IMR-90 (cell line): ENCODE measurements at regions of chr3 and their contacts with region 1.

Region 1: GRCh38 chr3:186815435-186815834 is 9.2 kb upstream of the RFC4 start:
- DNase-seq: peak; percentile 68
- ATAC-seq: peak; percentile 90
- H3K4me3 ChIP-seq: no peak overlapping the region
- H3K27ac ChIP-seq: no peak overlapping the region
- H3K4me1 ChIP-seq: peaks cover 3% of the 10 kb centered on the region; the same call in 1 of the 2 replicates
- H3K27me3 ChIP-seq: no peaks in the 10 kb centered on the region
- CTCF ChIP-seq: no peak
- POLR2A ChIP-seq: no peak
- RAD21 ChIP-seq: no peak

Region 2: DNA sequence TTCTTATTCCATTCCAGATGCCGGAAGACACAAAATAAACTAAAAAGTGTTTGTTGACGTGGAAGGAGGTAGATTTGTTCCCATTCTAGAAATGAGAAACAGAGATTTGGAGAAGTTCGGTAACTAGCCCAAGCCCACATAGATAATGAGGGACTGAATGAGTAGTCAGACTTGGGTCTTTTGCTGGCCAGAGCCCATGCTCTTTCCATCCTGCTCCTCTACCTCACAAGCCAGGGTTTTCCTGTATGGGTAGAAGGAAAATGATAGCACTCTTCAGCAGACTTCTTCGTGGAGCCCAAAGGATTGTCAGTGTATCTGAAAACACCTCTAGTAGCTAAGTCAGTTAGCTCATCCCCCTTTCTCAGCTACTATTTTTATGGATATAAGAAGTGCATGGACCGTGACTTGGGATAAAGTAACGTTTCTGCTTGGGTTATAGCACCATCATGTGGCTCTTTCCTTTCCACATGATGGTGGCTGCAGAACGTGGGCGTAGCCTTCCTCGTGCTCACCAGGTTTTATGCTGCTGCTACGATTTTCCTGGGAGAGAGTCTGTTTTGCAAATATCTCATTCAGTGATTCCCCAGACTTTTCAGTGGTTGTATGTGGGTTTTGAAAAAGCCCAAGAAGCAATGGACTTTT is 538.0 kb before region 1 on chr3:
- CTCF ChIA-PET with region 1: no interaction called
- POLR2A ChIA-PET with region 1: no interaction called
- dilution Hi-C with region 1: no loop called
- in situ Hi-C with region 1: no loop called
- intact Hi-C with region 1: loop called (anchors 10 kb)
- DNase-seq: peak; percentile 75
- ATAC-seq: peak; percentile 74
- H3K4me3 ChIP-seq: no peak overlapping the region
- H3K27ac ChIP-seq: no peak overlapping the region
- H3K4me1 ChIP-seq: no peaks in the 10 kb centered on the region
- H3K27me3 ChIP-seq: peaks cover 3% of the 10 kb centered on the region; the same call in 1 of the 2 replicates
- CTCF ChIP-seq: peak; percentile 76
- POLR2A ChIP-seq: no peak
- RAD21 ChIP-seq: peak; percentile 88